Cardiac septum (tissue), 1 donor: ENCODE measurements at regions of chr2 and their contacts with region 1.

Region 1: DNA sequence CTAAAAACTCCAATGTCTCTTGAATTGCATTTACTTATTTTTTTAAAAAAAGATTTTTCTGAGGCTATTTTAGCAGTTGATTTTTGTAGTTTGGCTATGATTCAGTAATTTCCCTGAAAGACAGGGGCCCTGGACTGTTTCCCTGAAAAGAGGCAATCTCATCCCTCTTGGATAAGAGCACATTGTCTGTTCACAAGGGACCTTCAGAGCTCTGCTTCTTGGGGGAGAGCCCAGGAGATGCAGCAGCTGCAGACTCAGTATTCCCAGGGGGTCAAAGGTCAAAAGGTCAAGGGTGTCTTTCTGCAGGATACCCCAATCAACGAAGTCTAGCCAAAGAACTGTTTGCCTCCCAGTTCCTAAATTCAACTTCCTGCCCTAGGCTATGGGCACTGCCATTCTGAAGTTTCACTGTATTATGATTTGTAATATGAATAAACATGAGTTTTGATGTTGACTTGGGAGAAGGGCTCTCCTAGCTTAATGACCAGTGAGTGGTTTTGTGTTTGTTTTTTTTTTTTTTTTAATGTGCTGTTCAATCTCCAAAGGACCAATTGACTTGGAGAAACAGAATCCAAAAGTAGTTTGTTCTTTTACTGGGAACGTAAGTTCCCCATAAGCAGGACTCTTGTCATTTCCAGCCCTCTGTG is 157.0 kb upstream of the SERPINE2 start:
- DNase-seq: no peak

Region 2: DNA sequence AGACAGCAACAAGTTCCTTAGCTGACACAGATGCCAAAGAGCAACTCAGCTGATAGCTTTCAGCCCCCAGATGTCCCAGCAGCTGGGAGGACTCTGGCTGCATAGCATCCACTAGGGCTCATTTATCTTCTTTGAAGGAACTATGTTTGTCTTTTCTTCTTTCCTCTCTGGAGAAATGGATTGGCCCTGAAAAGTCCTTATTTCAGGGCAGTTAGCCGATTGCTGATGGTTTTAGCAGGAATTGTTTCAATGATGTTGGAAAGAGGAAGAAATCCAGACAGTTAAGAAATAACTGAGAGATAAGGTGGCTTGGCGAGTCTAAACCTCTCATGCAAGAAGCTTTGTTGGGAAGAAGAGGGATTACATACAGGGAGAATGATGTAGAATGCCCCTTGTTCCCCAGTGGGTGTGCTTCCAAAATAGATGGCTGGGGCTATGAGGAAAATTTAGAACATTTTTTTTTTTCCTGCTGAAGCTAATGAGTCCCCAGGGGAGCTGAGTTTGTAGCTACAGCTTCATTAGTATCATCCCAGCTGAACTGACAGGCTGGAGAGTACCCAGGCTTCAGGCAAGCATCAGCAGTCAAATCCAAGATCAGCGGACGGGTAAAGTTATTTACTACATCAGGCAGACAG is 123.4 kb before region 1 on chr2:
- intact Hi-C with region 1: loop called (anchors 5 kb)
- DNase-seq: no peak

Region 3: DNA sequence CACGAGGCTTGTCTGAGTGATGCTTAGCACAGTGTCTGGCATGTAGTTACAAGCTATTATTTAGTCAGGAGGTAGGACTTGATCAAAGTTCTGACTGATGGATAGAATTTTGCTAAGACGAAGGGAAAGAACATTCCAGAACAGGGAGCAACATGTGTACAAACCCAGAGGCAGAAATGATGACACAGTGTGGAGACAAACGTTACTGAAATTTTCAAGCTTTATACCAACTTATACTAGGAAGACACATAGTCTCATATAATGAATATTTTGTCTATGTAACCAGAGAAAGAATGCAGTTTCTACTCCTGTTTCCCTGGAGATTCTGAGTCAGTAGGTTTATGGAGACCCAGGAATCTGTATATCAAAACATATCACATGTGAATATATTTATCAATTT is 82.5 kb after region 1 on chr2:
- intact Hi-C with region 1: no loop called
- DNase-seq: no peak

Region 4: GRCh38 chr2:224377751-224378700 is 182.0 kb after region 1 on chr2:
- intact Hi-C with region 1: no loop called
- DNase-seq: no peak